GM13976 (cell line): ENCODE measurements at regions of chr3 and their contacts with region 1.

Region 1: DNA sequence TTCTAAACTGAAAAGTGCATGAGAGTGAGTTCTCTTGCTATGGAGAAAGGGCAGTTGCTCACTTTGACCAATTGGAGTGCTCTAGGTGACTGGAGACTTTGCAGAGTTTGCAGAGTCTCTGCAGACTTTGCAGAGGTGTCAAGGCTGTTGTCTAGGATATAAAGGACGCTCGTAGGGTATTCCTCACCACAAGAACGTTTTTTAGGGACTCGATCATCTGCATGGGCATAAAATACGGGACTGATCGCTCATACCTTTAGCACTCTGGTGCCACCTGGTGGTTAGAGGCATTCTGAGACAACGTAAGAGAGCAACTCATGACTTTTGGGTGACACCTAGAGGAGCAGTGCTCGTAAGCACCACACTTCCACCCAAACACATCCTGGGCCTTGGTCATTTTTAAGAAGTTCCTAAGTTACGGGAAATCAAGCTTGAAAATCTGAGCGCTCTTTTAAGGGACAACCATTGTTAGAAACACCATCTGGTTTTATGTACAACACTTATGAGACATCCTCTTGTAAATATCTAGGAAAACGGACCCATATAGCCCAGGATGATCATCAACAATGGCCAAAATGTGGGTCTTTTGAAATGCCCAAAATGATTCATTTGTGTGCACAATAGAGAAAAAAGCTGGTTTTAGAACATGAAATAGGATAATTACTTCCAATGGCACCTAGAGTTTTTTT is 51.6 kb upstream of the XCR1 start:
- DNase-seq: peak; percentile 65
- CTCF ChIP-seq: peak; percentile 98

Region 2: GRCh38 chr3:45760878-45761711 is 317.8 kb before region 1 on chr3:
- in situ Hi-C with region 1: loop called (anchors 10 kb)
- DNase-seq: peak; percentile 91
- CTCF ChIP-seq: peak; percentile 80